PC-3 (cell line): ENCODE measurements at regions of chr3 and their contacts with region 1.

Region 1: DNA sequence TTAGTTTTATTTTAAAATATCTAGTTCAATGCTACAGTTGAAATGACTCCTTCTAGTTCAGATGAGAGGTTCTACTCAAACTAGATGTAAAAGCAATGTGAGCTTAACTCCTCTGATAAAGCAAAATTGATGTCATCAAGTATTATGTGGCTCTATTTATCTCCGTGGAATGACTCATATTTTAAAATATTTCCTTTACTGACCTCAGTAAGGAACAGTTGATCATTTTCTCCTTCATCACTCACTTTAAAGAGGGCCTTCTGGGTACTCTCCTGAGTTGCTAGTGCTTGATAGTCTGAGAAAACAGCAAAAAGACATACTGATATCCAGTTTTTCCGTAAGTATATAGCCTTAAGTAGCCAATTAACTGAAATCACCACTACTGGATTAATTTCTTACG is 1099.3 kb downstream of the ROBO2 start:
- DNase-seq: peak; percentile 83
- ATAC-seq: peak; percentile 65
- H3K4me3 ChIP-seq: no peak overlapping the region
- H3K27ac ChIP-seq: peak overlapping the region; percentile 78
- H3K4me1 ChIP-seq: peaks cover 53% of the 10 kb centered on the region
- H3K27me3 ChIP-seq: no peaks in the 10 kb centered on the region
- CTCF ChIP-seq: no peak

Region 2: GRCh38 chr3:77825001-77825827 is 314.0 kb before region 1 on chr3:
- CTCF ChIA-PET with region 1: no interaction called
- POLR2A ChIA-PET with region 1: no interaction called
- intact Hi-C with region 1: loop called (anchors 2 kb)
- DNase-seq: peak; percentile 99
- ATAC-seq: peak; percentile 92
- H3K4me3 ChIP-seq: no peak overlapping the region
- H3K27ac ChIP-seq: peak overlapping the region; percentile 92
- H3K4me1 ChIP-seq: peaks cover 34% of the 10 kb centered on the region
- H3K27me3 ChIP-seq: no peaks in the 10 kb centered on the region
- CTCF ChIP-seq: 0 out of 2 replicates have a peak, but pooled peaks have one; percentile 20

Region 3: GRCh38 chr3:77945320-77945719 is 193.8 kb before region 1 on chr3:
- CTCF ChIA-PET with region 1: no interaction called
- POLR2A ChIA-PET with region 1: no interaction called
- intact Hi-C with region 1: loop called (anchors 2 kb)
- DNase-seq: peak; percentile 69
- ATAC-seq: peak; percentile 82
- H3K4me3 ChIP-seq: no peak overlapping the region
- H3K27ac ChIP-seq: peak overlapping the region; percentile 84
- H3K4me1 ChIP-seq: peaks cover 13% of the 10 kb centered on the region
- H3K27me3 ChIP-seq: no peaks in the 10 kb centered on the region
- CTCF ChIP-seq: no peak

Region 4: DNA sequence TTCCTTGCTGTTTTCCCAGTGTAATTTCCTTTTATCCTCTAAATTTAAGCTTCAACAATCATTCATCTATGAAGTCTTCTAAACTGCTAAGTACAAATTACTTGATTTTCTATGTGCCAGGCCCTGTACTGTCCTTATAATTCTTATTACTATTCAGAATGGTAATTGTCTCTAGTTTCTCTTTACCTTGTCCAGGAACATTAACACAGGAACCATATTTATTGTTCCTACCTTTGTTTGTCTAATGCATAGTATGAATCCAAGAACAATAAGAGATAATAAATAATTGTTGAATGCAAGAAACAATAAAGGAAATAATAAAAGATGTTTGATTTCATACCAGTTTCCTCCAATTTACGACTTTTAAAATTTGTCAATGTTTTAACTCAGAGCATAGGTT is 16.1 kb before region 1 on chr3:
- CTCF ChIA-PET with region 1: no interaction called
- POLR2A ChIA-PET with region 1: interaction called, 4 read pairs
- intact Hi-C with region 1: loop called (anchors 1 kb)
- DNase-seq: no peak
- ATAC-seq: peak; percentile 74
- H3K4me3 ChIP-seq: no peak overlapping the region
- H3K27ac ChIP-seq: no peak overlapping the region
- H3K4me1 ChIP-seq: no peaks in the 10 kb centered on the region
- H3K27me3 ChIP-seq: no peaks in the 10 kb centered on the region
- CTCF ChIP-seq: no peak

Region 5: DNA sequence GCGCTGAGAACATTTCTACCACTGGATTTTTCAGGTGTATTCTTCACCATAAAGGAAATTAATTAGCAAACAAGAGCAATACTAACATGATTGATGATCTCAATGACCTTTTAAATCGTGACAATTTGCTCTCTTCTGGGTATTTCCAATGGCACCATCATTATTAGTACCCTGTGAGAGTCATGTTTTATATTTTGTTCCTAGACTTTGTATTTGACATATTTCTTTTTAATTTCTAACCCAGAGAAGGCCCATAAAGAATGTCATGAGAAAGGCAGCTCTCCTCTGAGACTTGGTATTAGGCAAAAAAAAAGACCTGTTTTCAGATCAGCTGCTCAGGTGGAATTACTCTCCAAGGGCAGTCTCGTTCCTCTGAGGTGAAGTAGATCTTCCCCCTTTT is 154.1 kb after region 1 on chr3:
- CTCF ChIA-PET with region 1: no interaction called
- POLR2A ChIA-PET with region 1: no interaction called
- intact Hi-C with region 1: no loop called
- DNase-seq: no peak
- ATAC-seq: no peak
- H3K4me3 ChIP-seq: no peak overlapping the region
- H3K27ac ChIP-seq: no peak overlapping the region
- H3K4me1 ChIP-seq: no peaks in the 10 kb centered on the region
- H3K27me3 ChIP-seq: peaks cover 8% of the 10 kb centered on the region; the same call in 1 of the 2 replicates
- CTCF ChIP-seq: no peak

Region 6: DNA sequence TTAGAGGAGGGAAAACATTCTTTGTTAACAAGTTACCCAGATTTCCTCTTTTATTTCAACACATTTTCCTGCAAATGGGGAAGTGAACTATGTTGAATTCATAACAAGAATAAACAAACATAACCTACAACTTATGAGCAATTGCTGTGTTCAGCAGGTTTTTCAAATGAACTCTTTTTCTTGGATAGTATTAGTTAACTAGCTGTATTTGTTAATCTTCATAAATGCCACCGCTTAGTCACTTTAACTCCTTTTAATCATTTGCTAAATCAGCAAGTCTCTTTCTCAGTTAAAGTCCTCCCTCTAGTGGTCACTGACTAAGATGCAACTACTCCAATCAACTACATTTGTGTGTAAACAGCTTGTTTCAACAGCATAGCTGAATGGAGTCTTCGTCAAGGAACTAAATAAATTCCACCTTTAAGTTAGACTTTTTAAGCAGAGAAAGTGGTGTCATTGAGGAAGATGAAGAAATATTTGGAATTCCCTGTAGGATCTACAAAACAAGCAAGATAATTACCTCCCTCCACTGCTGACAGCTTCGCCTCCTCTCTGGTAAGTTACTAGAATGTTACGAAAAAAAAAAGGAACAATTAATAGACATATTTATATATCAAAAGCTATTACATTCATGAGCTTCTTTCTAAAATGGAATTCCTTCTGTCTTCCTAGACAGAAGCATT is 506.6 kb after region 1 on chr3:
- CTCF ChIA-PET with region 1: no interaction called
- POLR2A ChIA-PET with region 1: no interaction called
- intact Hi-C with region 1: loop called (anchors 1 kb)
- DNase-seq: peak; percentile 93
- ATAC-seq: peak; percentile 79
- H3K4me3 ChIP-seq: no peak overlapping the region
- H3K27ac ChIP-seq: no peak overlapping the region
- H3K4me1 ChIP-seq: peaks cover 13% of the 10 kb centered on the region
- H3K27me3 ChIP-seq: no peaks in the 10 kb centered on the region
- CTCF ChIP-seq: peak; percentile 97